ENCODE measurements at regions of chr5 and their contacts with region 1.

Region 1: GRCh38 chr5:82334856-82335255 is 56.7 kb upstream of the RPS23 start:
- DNase-seq: no peak
- ATAC-seq: peak; percentile 92
- H3K4me3 ChIP-seq: no peak overlapping the region
- H3K27ac ChIP-seq: peak overlapping the region; percentile 78 to 90 (median 81)
- H3K4me1 ChIP-seq: peaks cover 22 to 36% of the 10 kb centered on the region in 2 donors
- H3K27me3 ChIP-seq: no peaks in the 10 kb centered on the region
- CTCF ChIP-seq: no peak
- POLR2A ChIP-seq: no peak

Region 2: DNA sequence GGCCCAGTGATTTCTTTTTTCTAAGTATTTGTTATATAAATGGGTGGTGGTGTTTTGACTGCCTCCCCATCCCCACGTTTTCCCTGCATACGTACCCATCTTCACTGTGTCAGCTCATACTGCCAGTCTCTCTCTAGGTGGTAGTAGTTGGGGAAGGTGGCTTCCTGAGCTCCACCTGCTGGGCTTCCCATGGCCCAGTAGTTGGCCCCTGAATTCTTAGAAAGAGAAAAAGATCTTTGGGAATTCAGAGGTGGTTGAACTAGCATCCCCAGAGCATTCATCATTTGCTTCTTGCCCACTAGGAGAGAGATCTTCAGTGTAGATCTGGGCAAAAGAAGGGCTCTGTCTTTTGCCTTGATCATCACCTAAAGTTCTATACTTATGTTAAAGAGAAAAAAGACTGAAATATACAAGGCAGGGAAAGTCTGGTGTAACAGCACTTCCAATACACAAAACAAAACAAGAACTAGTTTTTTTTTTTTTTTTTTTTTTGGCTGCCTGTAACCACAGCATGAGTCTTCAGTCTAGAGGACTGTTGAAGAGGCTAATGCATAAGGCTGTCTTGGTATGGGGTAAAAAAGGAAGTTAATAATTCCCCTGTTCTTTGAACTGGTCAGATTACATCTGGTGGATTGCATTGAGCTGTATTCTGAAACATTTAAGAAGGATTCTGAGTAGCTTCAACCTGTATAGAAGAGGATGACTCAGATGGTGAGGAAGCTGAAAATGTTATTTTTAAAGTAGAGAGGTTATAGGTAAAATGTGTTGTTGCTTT is 234.4 kb before region 1 on chr5:
- in situ Hi-C with region 1: no loop called
- intact Hi-C with region 1: no loop called
- DNase-seq: no peak
- ATAC-seq: no peak
- H3K4me3 ChIP-seq: no peak overlapping the region
- H3K27ac ChIP-seq: no peak overlapping the region
- H3K4me1 ChIP-seq: peaks cover 0 to 4% of the 10 kb centered on the region in 2 donors
- H3K27me3 ChIP-seq: no peaks in the 10 kb centered on the region
- CTCF ChIP-seq: no peak
- POLR2A ChIP-seq: no peak

Region 3: DNA sequence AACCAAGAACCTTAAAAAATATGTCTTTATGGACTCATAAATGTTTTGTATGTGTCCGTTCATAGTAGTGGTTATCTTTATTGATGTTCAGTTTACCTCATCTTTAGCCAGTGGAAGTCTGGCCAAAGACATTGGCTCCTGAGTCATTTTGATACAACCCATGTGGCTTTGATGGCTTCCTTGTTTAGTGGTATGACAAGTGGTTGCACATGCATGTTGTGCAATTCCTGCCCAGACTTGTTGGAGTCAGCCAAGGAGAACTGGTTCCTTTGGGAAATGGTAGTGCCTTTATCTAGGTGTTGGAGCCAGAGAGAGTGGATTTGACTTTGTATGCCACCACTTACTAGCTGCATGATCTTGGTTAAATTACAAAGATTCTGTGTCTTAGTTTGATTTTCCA is 151.0 kb before region 1 on chr5:
- in situ Hi-C with region 1: no loop called
- intact Hi-C with region 1: no loop called
- DNase-seq: peak; percentile 3 to 30
- ATAC-seq: peak in 1 of 2 donors; percentile 53
- H3K4me3 ChIP-seq: no peak overlapping the region
- H3K27ac ChIP-seq: no peak overlapping the region
- H3K4me1 ChIP-seq: no peaks in the 10 kb centered on the region
- H3K27me3 ChIP-seq: no peaks in the 10 kb centered on the region
- CTCF ChIP-seq: no peak
- POLR2A ChIP-seq: no peak

Region 4: DNA sequence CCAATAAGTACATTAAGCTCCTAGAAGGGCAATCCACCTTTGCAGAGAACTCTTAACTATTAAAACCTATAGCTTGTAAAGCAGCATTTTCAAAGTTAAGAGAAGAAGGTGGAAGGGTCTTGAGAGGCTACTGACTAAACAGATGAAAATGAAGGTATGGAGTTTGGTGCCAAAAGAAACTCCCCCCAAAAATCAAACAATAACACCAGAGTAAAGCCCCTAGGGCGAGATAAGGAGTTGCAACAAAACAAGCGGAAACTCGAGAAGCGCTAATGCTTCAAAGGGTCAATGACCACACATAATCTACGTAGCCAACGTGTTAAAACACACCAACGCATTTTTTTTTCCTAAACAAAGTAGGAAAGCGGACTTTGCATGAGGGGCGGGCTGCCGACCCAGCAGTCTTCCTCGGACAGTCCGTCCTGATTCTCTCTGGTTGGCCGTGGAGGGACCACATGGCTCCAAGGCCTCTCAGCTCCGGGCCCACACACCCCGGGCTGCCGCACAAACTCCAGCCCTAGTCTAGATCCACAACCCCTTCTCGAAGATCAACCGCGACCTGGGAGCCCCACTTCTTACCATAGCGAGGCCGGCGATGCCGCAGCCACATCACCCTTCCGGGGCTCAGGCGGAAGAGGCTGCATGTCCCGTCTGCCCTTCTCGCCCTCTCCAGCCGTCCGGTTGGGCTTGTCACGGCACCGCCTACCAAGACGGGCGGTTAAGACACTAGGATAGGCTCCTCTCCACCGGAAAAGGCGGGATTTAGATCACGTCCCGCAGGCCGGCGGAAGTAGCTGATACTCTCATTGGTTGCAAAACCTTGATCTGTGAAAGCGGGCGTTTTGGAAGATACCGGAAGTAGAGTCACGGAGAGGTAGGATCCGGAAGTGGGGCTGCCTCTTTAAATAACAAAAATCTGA is 742.1 kb after region 1 on chr5 and contains the starts of genes TMEM167A and XRCC4:
- in situ Hi-C with region 1: no loop called
- intact Hi-C with region 1: loop called (anchors 10 kb)
- DNase-seq: peak; percentile 97
- ATAC-seq: peak; percentile 99 to 100
- H3K4me3 ChIP-seq: peak within 1 kb of the TSS; percentile 74 to 97 (median 88)
- H3K27ac ChIP-seq: peak within 1 kb of the TSS; percentile 87 to 93 (median 92)
- H3K4me1 ChIP-seq: peaks cover 29 to 36% of the 10 kb centered on the region in 2 donors
- H3K27me3 ChIP-seq: no peaks in the 10 kb centered on the region
- CTCF ChIP-seq: no peak
- POLR2A ChIP-seq: peak; percentile 76 to 86
- total RNA-seq, gene TMEM167A: 16.5 to 24.6 (median 20.0) TPM
- total RNA-seq, gene XRCC4: 1.8 to 3.5 (median 2.6) TPM